Pancreas (tissue), 10 donors: ENCODE measurements at regions of chr19 and their contacts with region 1.

Region 1: GRCh38 chr19:39792999-39793546 is 14.4 kb downstream of the LEUTX start:
- DNase-seq: peak; percentile 49 to 88 (median 70)
- ATAC-seq: peak; percentile 96 to 99 (median 99)
- H3K4me3 ChIP-seq: peak overlapping the region in 2 of 4 donors; percentile 29 to 46
- H3K27ac ChIP-seq: no peak overlapping the region
- H3K4me1 ChIP-seq: no peaks in the 10 kb centered on the region
- H3K27me3 ChIP-seq: peaks cover 0 to 3% (median 0%) of the 10 kb centered on the region in 4 donors
- CTCF ChIP-seq: peak; percentile 64 to 85 (median 73)

Region 2: DNA sequence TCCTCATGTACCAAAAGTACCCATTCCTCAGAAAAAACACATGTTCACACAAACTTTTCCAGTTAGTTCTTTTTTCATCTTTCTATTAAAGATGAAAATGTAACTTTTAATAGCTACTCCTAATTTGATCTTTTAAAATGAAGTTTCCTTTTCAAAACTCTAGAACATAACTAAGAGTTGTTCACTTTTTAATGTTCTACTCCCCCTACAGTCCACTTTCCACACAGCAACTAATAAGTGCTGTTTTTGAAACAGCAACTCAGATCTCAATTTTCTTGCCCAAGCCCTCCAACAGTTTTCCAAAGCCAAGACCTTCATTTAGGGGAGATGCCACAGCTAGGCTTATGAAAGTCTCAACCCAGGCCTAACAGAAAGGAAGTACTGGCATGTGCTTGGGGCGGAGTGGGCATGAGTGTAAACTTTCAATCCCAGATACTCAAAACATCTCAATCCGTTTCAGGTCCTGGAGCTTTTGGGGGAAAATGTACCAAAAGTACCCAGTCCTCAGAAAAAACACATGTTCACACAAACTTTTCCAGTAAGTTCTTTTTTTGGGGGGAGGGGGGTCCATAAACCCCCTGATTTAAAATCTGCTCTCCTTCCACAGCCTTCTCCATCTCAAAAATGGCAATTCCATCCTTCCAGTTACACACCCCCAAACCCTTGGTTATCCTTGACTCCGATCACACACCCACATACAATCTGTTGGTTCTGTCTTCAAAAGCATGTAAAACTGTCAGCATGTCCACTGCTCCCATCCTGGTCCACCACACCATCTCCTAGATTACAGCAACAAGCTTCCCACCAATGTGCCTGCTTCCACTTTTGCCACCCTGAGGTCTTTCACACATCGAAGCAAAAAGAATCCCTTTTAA is 51.1 kb after region 1 on chr19:
- intact Hi-C with region 1: loop called in 1 of 3 experiments (anchors 5 kb)
- DNase-seq: no peak
- ATAC-seq: no peak
- H3K4me3 ChIP-seq: no peak overlapping the region
- H3K27ac ChIP-seq: no peak overlapping the region
- H3K4me1 ChIP-seq: peaks cover 11 to 23% (median 13%) of the 10 kb centered on the region in 3 donors
- H3K27me3 ChIP-seq: no peaks in the 10 kb centered on the region
- CTCF ChIP-seq: peak; percentile 28 to 46 (median 36)